Caco-2 (cell line): ENCODE measurements at regions of chr16 and their contacts with region 1.

Region 1: GRCh38 chr16:55370762-55371482 is 46.9 kb downstream of the IRX6 start:
- DNase-seq: peak; percentile 68 to 73
- H3K4me3 ChIP-seq: no peak overlapping the region
- H3K4me3 Mint-ChIP-seq: no peak overlapping the region
- H3K27ac Mint-ChIP-seq: no peak overlapping the region
- H3K4me1 ChIP-seq: no peaks in the 10 kb centered on the region
- H3K4me1 Mint-ChIP-seq: peaks cover 8% of the 10 kb centered on the region
- H3K27me3 ChIP-seq: no peaks in the 10 kb centered on the region
- H3K27me3 Mint-ChIP-seq: peaks cover 7% of the 10 kb centered on the region
- CTCF ChIP-seq: peak in 1 of 2 experiments; percentile 73

Region 2: GRCh38 chr16:55035029-55035428 is 335.9 kb before region 1 on chr16:
- CTCF ChIA-PET with region 1: interaction called, 12 read pairs
- POLR2A ChIA-PET with region 1: no interaction called
- intact Hi-C with region 1: no loop called
- DNase-seq: peak; percentile 69 to 75
- H3K4me3 ChIP-seq: no peak overlapping the region
- H3K4me3 Mint-ChIP-seq: no peak overlapping the region
- H3K27ac Mint-ChIP-seq: no peak overlapping the region
- H3K4me1 ChIP-seq: 0 out of 2 replicates have a peak, but pooled peaks cover 6% of the 10 kb centered on the region
- H3K4me1 Mint-ChIP-seq: no peaks in the 10 kb centered on the region
- H3K27me3 ChIP-seq: no peaks in the 10 kb centered on the region
- H3K27me3 Mint-ChIP-seq: no peaks in the 10 kb centered on the region
- CTCF ChIP-seq: peak; percentile 62 to 72

Region 3: GRCh38 chr16:55120408-55120807 is 250.5 kb before region 1 on chr16:
- CTCF ChIA-PET with region 1: interaction called, 4 read pairs
- POLR2A ChIA-PET with region 1: no interaction called
- intact Hi-C with region 1: loop called (anchors 1 kb)
- DNase-seq: peak; percentile 31 to 48
- H3K4me3 ChIP-seq: no peak overlapping the region
- H3K4me3 Mint-ChIP-seq: no peak overlapping the region
- H3K27ac Mint-ChIP-seq: no peak overlapping the region
- H3K4me1 ChIP-seq: no peaks in the 10 kb centered on the region
- H3K4me1 Mint-ChIP-seq: no peaks in the 10 kb centered on the region
- H3K27me3 ChIP-seq: no peaks in the 10 kb centered on the region
- H3K27me3 Mint-ChIP-seq: no peaks in the 10 kb centered on the region
- CTCF ChIP-seq: peak in 1 of 2 experiments; percentile 55

Region 4: DNA sequence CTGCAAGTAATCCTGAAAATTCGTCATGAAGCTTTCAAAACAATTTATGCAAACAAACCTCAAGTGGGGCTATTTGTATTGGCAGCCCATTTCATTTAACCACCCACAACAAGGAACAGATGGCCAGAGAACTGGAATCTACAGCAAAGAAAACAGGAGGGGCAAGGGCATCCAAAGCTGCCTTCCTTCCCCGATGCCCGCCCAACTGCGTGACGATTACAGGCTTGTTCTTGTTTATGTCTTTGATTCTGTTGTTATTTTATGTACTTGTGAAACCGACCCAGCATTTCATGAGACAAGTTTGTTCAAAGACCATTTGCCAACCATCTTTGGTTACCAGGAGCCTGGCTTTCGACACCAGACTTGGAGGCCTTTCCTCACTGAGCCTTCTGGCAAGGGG is 106.0 kb before region 1 on chr16:
- CTCF ChIA-PET with region 1: no interaction called
- POLR2A ChIA-PET with region 1: no interaction called
- intact Hi-C with region 1: no loop called
- DNase-seq: no peak
- H3K4me3 ChIP-seq: no peak overlapping the region
- H3K4me3 Mint-ChIP-seq: no peak overlapping the region
- H3K27ac Mint-ChIP-seq: no peak overlapping the region
- H3K4me1 ChIP-seq: no peaks in the 10 kb centered on the region
- H3K4me1 Mint-ChIP-seq: no peaks in the 10 kb centered on the region
- H3K27me3 ChIP-seq: no peaks in the 10 kb centered on the region
- H3K27me3 Mint-ChIP-seq: peaks cover 4% of the 10 kb centered on the region
- CTCF ChIP-seq: no peak

Region 5: GRCh38 chr16:55294931-55295342 is 76.0 kb before region 1 on chr16:
- CTCF ChIA-PET with region 1: interaction called, 3 read pairs
- POLR2A ChIA-PET with region 1: no interaction called
- intact Hi-C with region 1: loop called (anchors 1 kb)
- DNase-seq: no peak
- H3K4me3 ChIP-seq: no peak overlapping the region
- H3K4me3 Mint-ChIP-seq: no peak overlapping the region
- H3K27ac Mint-ChIP-seq: no peak overlapping the region
- H3K4me1 ChIP-seq: no peaks in the 10 kb centered on the region
- H3K4me1 Mint-ChIP-seq: no peaks in the 10 kb centered on the region
- H3K27me3 ChIP-seq: no peaks in the 10 kb centered on the region
- H3K27me3 Mint-ChIP-seq: peaks cover 7% of the 10 kb centered on the region
- CTCF ChIP-seq: no peak

Region 6: GRCh38 chr16:55643161-55643970 is 272.4 kb after region 1 on chr16:
- CTCF ChIA-PET with region 1: no interaction called
- POLR2A ChIA-PET with region 1: no interaction called
- intact Hi-C with region 1: no loop called
- DNase-seq: peak in 1 of 2 experiments; percentile 47
- H3K4me3 ChIP-seq: no peak overlapping the region
- H3K4me3 Mint-ChIP-seq: no peak overlapping the region
- H3K27ac Mint-ChIP-seq: no peak overlapping the region
- H3K4me1 ChIP-seq: no peaks in the 10 kb centered on the region
- H3K4me1 Mint-ChIP-seq: no peaks in the 10 kb centered on the region
- H3K27me3 ChIP-seq: no peaks in the 10 kb centered on the region
- H3K27me3 Mint-ChIP-seq: peaks cover 14% of the 10 kb centered on the region
- CTCF ChIP-seq: peak in 1 of 2 experiments; percentile 40